Caco-2 (cell line): ENCODE measurements at regions of chr3 and their contacts with region 1.

Region 1: DNA sequence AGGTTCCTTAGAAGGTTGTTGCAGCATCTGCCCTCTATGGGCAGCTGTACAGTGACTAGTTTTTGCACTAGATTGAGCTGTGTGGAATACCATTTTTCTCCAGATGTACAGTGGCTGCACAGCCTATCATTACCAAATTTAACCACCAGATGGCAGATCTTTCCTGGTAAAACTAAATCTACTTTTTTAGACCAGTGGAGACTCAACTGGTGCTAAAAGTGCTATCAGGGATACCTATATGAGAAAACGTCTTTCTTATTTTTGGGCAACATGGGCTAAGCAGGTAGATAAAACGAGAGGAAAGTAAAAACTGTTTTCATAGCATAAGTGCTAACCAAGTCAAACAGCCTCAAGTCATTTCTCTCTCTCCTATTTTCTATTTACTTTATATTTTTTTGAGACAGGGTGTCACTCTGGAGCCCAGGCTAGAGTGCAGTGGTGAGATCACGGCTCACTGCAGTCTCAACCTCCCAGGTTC is 21.2 kb downstream of the IGSF10 start:
- DNase-seq: peak in 1 of 2 experiments; percentile 74
- H3K4me3 ChIP-seq: no peak overlapping the region
- H3K4me3 Mint-ChIP-seq: no peak overlapping the region
- H3K27ac Mint-ChIP-seq: no peak overlapping the region
- H3K4me1 ChIP-seq: no peaks in the 10 kb centered on the region
- H3K4me1 Mint-ChIP-seq: no peaks in the 10 kb centered on the region
- H3K27me3 ChIP-seq: no peaks in the 10 kb centered on the region
- H3K27me3 Mint-ChIP-seq: no peaks in the 10 kb centered on the region
- CTCF ChIP-seq: peak; percentile 57 to 83

Region 2: GRCh38 chr3:151075869-151076562 is 363.7 kb before region 1 on chr3:
- CTCF ChIA-PET with region 1: no interaction called
- POLR2A ChIA-PET with region 1: no interaction called
- intact Hi-C with region 1: no loop called
- DNase-seq: no peak
- H3K4me3 ChIP-seq: no peak overlapping the region
- H3K4me3 Mint-ChIP-seq: no peak overlapping the region
- H3K27ac Mint-ChIP-seq: no peak overlapping the region
- H3K4me1 ChIP-seq: no peaks in the 10 kb centered on the region
- H3K4me1 Mint-ChIP-seq: no peaks in the 10 kb centered on the region
- H3K27me3 ChIP-seq: no peaks in the 10 kb centered on the region
- H3K27me3 Mint-ChIP-seq: no peaks in the 10 kb centered on the region
- CTCF ChIP-seq: no peak

Region 3: GRCh38 chr3:151460774-151461450 is 21.2 kb after region 1 on chr3 and contains the start of gene IGSF10:
- CTCF ChIA-PET with region 1: interaction called, 12 read pairs
- POLR2A ChIA-PET with region 1: no interaction called
- intact Hi-C with region 1: no loop called
- DNase-seq: peak; percentile 51 to 53
- H3K4me3 ChIP-seq: peak within 1 kb of the TSS; percentile 68
- H3K4me3 Mint-ChIP-seq: peak within 1 kb of the TSS; percentile 77
- H3K27ac Mint-ChIP-seq: no peak within 1 kb of the TSS
- H3K4me1 ChIP-seq: peaks cover 10% of the 10 kb centered on the region
- H3K4me1 Mint-ChIP-seq: peaks cover 7% of the 10 kb centered on the region
- H3K27me3 ChIP-seq: no peaks in the 10 kb centered on the region
- H3K27me3 Mint-ChIP-seq: no peaks in the 10 kb centered on the region
- CTCF ChIP-seq: no peak
- total RNA-seq, gene IGSF10: 2.6 TPM in 2 replicates

Region 4: GRCh38 chr3:151468284-151468917 is 28.7 kb after region 1 on chr3:
- CTCF ChIA-PET with region 1: no interaction called
- POLR2A ChIA-PET with region 1: no interaction called
- intact Hi-C with region 1: loop called (anchors 1 kb)
- DNase-seq: peak; percentile 54 to 78
- H3K4me3 ChIP-seq: no peak overlapping the region
- H3K4me3 Mint-ChIP-seq: no peak overlapping the region
- H3K27ac Mint-ChIP-seq: no peak overlapping the region
- H3K4me1 ChIP-seq: no peaks in the 10 kb centered on the region
- H3K4me1 Mint-ChIP-seq: no peaks in the 10 kb centered on the region
- H3K27me3 ChIP-seq: no peaks in the 10 kb centered on the region
- H3K27me3 Mint-ChIP-seq: no peaks in the 10 kb centered on the region
- CTCF ChIP-seq: peak; percentile 77 to 90

Region 5: GRCh38 chr3:151638555-151639417 is 199.1 kb after region 1 on chr3:
- CTCF ChIA-PET with region 1: interaction called, 3 read pairs
- POLR2A ChIA-PET with region 1: no interaction called
- intact Hi-C with region 1: loop called (anchors 1 kb)
- DNase-seq: peak; percentile 72 to 76
- H3K4me3 ChIP-seq: no peak overlapping the region
- H3K4me3 Mint-ChIP-seq: peak overlapping the region; percentile 14
- H3K27ac Mint-ChIP-seq: peak overlapping the region; percentile 59
- H3K4me1 ChIP-seq: peaks cover 31% of the 10 kb centered on the region
- H3K4me1 Mint-ChIP-seq: peaks cover 21% of the 10 kb centered on the region
- H3K27me3 ChIP-seq: no peaks in the 10 kb centered on the region
- H3K27me3 Mint-ChIP-seq: no peaks in the 10 kb centered on the region
- CTCF ChIP-seq: no peak

Region 6: DNA sequence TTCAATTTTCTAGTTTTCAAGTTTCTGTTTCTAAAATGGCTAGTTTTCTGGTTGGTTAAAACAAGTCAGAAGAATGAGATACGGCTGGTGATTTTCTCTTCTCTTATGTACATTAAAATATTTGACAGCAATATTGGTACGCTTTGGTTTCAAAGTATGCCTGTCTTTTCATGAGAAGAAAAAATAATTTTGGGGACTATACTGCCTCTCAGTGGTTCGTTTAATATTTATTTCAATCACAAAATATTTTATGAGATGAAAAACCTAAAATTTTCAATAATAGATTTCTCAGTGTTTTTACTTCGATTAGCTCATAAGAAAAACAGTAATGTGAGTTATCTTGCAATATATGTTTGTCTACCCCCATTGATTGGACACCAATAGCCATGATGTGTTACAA is 221.2 kb after region 1 on chr3:
- CTCF ChIA-PET with region 1: interaction called, 3 read pairs
- POLR2A ChIA-PET with region 1: no interaction called
- intact Hi-C with region 1: loop called (anchors 1 kb)
- DNase-seq: no peak
- H3K4me3 ChIP-seq: no peak overlapping the region
- H3K4me3 Mint-ChIP-seq: no peak overlapping the region
- H3K27ac Mint-ChIP-seq: no peak overlapping the region
- H3K4me1 ChIP-seq: peaks cover 6% of the 10 kb centered on the region; the same call in 1 of the 2 replicates
- H3K4me1 Mint-ChIP-seq: peaks cover 6% of the 10 kb centered on the region
- H3K27me3 ChIP-seq: no peaks in the 10 kb centered on the region
- H3K27me3 Mint-ChIP-seq: no peaks in the 10 kb centered on the region
- CTCF ChIP-seq: peak in 1 of 2 experiments; percentile 16

Region 7: GRCh38 chr3:151724576-151725562 is 285.2 kb after region 1 on chr3:
- CTCF ChIA-PET with region 1: no interaction called
- POLR2A ChIA-PET with region 1: no interaction called
- intact Hi-C with region 1: no loop called
- DNase-seq: no peak
- H3K4me3 ChIP-seq: no peak overlapping the region
- H3K4me3 Mint-ChIP-seq: no peak overlapping the region
- H3K27ac Mint-ChIP-seq: no peak overlapping the region
- H3K4me1 ChIP-seq: no peaks in the 10 kb centered on the region
- H3K4me1 Mint-ChIP-seq: no peaks in the 10 kb centered on the region
- H3K27me3 ChIP-seq: no peaks in the 10 kb centered on the region
- H3K27me3 Mint-ChIP-seq: no peaks in the 10 kb centered on the region
- CTCF ChIP-seq: no peak